ENCODE measurements at regions of chrX and their contacts with region 1.

Region 1: GRCh38 chrX:1453951-1454785 is 1.5 kb upstream of the ASMTL start:
- DNase-seq: peak; percentile 83
- H3K4me3 Mint-ChIP-seq: peak overlapping the region; percentile 60
- H3K27ac Mint-ChIP-seq: no peak overlapping the region
- H3K4me1 Mint-ChIP-seq: peaks cover 9% of the 10 kb centered on the region
- H3K27me3 Mint-ChIP-seq: no peaks in the 10 kb centered on the region

Region 2: DNA sequence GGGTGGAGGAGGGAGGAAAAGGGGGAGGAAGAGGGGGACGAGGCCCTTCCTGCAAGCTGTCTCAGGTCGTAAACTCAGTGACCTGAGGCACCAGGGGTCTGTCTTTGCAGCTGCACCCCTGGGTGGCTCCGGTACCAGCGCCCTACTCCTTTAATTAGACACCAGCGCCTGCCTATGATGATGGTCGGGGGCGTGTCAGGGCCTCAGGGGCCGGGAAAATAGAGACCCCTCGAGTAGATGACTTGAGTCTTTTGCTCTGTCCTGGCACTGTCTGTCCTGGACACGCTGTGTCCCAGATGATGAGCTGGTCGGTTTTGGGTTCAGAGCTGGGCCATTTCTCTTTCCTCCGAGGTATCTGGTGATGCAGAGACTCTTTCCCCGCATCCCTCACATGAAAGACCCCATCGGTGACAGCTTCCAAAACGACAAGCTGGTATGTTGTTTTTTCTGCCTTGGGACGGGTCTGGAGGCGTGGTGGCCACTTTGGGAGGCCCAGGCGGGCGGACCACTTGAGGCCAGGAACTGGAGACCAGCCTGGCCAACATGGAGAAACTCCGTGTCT is 73.4 kb before region 1 on chrX:
- intact Hi-C with region 1: no loop called
- DNase-seq: no peak
- H3K4me3 Mint-ChIP-seq: no peak overlapping the region
- H3K27ac Mint-ChIP-seq: no peak overlapping the region
- H3K4me1 Mint-ChIP-seq: no peaks in the 10 kb centered on the region
- H3K27me3 Mint-ChIP-seq: no peaks in the 10 kb centered on the region

Region 3: GRCh38 chrX:1391707-1392375 is 62.3 kb before region 1 on chrX and contains the start of gene SLC25A6:
- intact Hi-C with region 1: loop called (anchors 1 kb)
- DNase-seq: peak; percentile 99
- H3K4me3 Mint-ChIP-seq: peak within 1 kb of the TSS; percentile 95
- H3K27ac Mint-ChIP-seq: peak within 1 kb of the TSS; percentile 95
- H3K4me1 Mint-ChIP-seq: peaks cover 26% of the 10 kb centered on the region
- H3K27me3 Mint-ChIP-seq: no peaks in the 10 kb centered on the region
- total RNA-seq, gene SLC25A6: 318 and 325 TPM in 2 replicates

Region 4: GRCh38 chrX:1591102-1591900 is 137.1 kb after region 1 on chrX and contains the start of gene AKAP17A:
- intact Hi-C with region 1: loop called (anchors 1 kb)
- DNase-seq: peak; percentile 98
- H3K4me3 Mint-ChIP-seq: peak within 1 kb of the TSS; percentile 93
- H3K27ac Mint-ChIP-seq: peak within 1 kb of the TSS; percentile 92
- H3K4me1 Mint-ChIP-seq: peaks cover 24% of the 10 kb centered on the region
- H3K27me3 Mint-ChIP-seq: no peaks in the 10 kb centered on the region
- total RNA-seq, gene AKAP17A: 67.4 and 67.6 TPM in 2 replicates

Region 5: DNA sequence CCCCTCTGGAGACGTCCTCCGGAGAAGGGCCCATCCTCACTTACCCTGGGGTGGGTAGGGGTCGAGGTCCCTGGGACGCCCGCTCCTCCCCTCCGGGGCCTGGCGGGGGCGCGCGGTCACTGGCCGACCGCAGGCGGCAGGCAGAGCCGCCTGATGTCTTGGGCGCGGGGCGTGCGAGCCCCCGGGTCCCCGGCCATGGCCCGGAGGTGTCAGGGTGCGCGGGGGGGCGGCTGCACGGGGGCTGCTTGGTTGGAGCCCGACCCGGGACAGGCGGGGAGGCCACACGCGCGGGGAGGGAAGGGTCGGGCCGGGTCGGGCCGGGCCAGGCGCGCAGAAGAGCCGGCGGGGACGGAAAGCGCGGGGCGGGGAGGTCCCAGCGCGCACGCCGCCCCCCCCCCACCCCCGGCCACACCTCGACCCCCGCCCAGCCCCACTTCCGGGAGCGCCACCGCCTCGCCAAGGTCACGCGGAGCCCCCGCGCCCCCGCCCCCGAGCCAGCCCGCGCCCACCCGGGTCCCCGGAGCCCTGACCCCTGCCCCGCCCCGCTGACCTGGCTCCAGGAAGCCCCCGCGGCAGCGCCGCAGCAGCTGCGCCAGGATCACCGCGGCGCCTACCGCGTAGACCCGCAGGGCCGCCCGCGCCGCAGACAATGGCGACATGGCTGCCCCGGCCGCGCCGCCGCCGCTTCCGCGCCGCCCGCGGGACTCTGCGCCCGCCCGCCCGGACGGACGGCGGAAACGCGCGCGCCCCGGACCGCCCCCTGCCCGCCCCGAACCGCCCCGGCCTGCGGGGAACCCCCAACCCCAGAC is 1046.3 kb after region 1 on chrX and contains the starts of genes DHRSX and ZBED1:
- intact Hi-C with region 1: loop called (anchors 10 kb)
- DNase-seq: peak; percentile 44
- H3K4me3 Mint-ChIP-seq: peak within 1 kb of the TSS; percentile 70
- H3K27ac Mint-ChIP-seq: peak within 1 kb of the TSS; percentile 80
- H3K4me1 Mint-ChIP-seq: peaks cover 24% of the 10 kb centered on the region
- H3K27me3 Mint-ChIP-seq: no peaks in the 10 kb centered on the region
- total RNA-seq, gene DHRSX: 26.1 and 26.4 TPM in 2 replicates
- total RNA-seq, gene ZBED1: 37.3 and 43.1 TPM in 2 replicates